HepG2 (cell line): ENCODE measurements at regions of chr1 and their contacts with region 1.

Region 1: DNA sequence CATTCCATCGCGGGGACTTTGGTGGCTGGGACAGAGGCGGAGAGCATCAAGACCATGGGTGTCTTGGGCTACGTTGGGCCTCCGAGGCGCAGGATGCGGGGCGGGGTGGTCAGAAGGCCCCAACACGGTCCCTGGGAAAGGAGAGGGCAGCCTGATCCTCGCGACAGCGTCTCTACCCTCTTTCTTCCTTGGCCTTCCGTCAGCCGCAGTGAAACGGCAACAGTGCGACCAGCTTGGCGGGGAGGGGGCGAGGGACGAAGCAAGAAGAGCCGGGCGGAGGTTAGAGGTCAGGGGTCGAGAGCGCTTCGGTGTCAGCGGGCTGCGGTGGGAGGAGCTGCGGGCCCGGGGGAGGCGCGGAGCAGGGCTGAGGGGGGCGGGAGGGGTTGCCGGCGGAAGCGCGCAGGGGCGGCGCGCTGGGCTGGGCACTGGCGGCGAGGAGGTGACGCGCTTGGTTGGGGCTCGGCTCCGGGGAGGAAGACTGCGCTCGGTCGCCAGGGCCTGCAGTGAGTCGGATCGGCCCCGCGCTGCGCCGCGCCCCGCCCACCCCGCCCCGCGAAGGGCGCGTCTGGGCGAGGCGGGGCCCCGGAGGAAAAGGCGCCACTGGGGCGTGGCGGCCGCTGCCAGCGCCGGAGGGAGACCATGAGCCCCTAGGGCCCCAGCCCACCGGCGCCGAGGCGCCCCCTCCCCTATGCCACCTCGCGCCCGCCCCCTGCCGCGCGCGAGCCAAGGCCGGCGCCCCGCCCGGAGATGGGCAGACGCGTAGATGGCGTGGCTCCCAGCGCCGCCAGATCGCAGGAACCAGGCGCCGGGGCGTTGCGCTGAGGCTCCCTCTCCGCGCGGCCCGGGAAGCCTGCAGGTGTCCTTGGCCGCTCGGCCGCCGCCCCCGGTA is at the start of gene KCNC4:
- DNase-seq: peak; percentile 53
- ATAC-seq: peak; percentile 71
- H3K4me3 ChIP-seq: peak within 1 kb of the TSS; percentile 47 to 74 (median 57)
- H3K27ac ChIP-seq: no peak within 1 kb of the TSS
- H3K4me1 ChIP-seq: peaks cover 10% of the 10 kb centered on the region
- H3K27me3 ChIP-seq: peaks cover 6 to 62% of the 10 kb centered on the region in 2 experiments; a peak in 3 of 5 replicates
- CTCF ChIP-seq: no peak
- EP300 ChIP-seq: no peak
- POLR2A ChIP-seq: no peak
- RAD21 ChIP-seq: no peak
- total RNA-seq, gene KCNC4: 0.20 and 0.24 TPM in 2 replicates

Region 2: DNA sequence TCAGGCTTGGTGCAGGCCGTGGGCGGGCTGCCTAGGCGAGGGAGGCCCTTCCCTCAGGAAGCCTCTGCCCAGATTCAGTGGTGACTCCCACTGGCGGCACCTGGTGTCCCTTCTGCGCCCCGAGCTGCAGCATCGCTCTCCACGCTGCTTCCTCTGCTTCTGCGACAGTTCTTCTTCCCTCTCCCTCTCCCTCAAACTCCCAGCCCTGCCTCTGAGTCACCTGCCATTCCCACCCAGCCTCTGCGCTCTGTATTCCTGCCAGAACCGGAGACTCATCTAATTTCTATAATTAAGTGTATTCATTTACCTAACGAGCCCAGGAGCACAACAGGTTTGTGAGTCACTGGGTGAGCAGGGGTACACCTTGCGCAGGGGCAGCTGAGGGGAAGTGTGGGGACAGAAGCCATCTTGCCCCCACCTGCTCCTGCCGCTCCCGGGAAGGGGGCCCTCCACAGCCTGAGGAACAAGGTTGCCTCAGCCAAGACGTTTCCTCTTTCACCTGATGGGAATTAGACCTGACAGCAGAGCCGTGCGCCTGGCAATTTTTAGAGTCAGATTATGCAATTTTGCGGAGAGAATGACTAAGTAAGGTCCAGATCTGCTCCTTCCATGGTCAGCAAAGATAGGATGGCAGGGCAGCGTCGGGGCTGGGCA is 19.5 kb after region 1 on chr1:
- CTCF ChIA-PET with region 1: no interaction called
- POLR2A ChIA-PET with region 1: no interaction called
- in situ Hi-C with region 1: no loop called
- intact Hi-C with region 1: loop called (anchors 1 kb)
- DNase-seq: no peak
- ATAC-seq: no peak
- H3K4me3 ChIP-seq: no peak overlapping the region
- H3K27ac ChIP-seq: no peak overlapping the region
- H3K4me1 ChIP-seq: peaks cover 8% of the 10 kb centered on the region; the same call in 1 of the 2 replicates
- H3K27me3 ChIP-seq: peaks cover 0 to 10% of the 10 kb centered on the region in 2 experiments; a peak in 4 of 5 replicates
- CTCF ChIP-seq: no peak
- EP300 ChIP-seq: no peak
- POLR2A ChIP-seq: no peak
- RAD21 ChIP-seq: no peak

Region 3: DNA sequence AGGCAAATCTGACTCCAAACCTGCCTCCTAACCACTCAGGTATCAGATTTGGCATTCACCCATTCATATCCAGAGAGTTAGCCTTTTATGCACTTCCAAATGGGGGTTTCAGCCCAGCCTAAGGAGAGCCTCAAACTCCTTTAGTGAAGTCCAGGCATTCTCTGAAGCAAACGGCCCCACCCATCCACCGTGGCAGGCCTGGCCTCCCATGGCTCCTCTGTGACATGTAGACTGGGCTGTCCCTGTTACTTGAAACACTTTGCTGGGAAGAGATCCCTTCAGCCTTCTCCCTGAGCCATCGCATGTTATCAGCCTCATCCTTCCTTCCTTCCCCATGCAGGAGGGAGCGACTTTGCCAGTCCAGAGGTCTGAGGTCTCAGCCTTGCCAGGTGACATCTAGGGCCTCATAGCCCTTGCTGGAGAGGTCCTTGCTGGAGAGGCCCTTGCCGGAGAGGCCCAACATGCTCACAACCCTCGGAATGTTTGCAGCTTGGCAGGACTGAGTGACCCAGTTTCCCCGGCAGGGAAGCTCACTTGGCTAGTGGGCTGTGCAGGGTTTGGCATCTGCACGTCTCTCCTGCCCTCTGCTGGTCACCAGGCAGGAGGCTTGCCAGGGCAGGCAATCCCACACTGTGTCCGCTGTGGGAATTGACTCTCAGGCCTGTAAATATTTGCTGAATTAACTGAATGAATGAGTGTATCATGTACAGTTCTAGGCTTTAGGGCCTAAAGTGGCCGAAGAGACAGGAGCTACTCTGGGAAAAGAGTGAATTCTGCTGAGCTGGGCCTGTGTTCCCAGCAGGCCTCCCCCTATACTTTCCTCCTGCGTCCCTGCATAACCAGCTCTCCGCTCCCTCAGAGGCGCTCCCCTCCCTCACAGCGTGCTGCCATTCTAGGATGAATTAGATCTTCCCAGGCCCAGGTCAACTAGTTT is 102.5 kb after region 1 on chr1:
- CTCF ChIA-PET with region 1: interaction called, 57 read pairs
- POLR2A ChIA-PET with region 1: no interaction called
- in situ Hi-C with region 1: loop called (anchors 5 kb)
- intact Hi-C with region 1: loop called (anchors 1 kb)
- DNase-seq: peak; percentile 59
- ATAC-seq: peak; percentile 99
- H3K4me3 ChIP-seq: peak overlapping the region in 1 of 3 experiments; percentile 4; a peak in 1 of 6 replicates
- H3K27ac ChIP-seq: no peak overlapping the region
- H3K4me1 ChIP-seq: peaks cover 8% of the 10 kb centered on the region; the same call in 1 of the 2 replicates
- H3K27me3 ChIP-seq: peaks cover 0 to 5% of the 10 kb centered on the region in 2 experiments; a peak in 2 of 5 replicates
- CTCF ChIP-seq: peak; percentile 97
- EP300 ChIP-seq: no peak
- POLR2A ChIP-seq: no peak
- RAD21 ChIP-seq: peak; percentile 94

Region 4: DNA sequence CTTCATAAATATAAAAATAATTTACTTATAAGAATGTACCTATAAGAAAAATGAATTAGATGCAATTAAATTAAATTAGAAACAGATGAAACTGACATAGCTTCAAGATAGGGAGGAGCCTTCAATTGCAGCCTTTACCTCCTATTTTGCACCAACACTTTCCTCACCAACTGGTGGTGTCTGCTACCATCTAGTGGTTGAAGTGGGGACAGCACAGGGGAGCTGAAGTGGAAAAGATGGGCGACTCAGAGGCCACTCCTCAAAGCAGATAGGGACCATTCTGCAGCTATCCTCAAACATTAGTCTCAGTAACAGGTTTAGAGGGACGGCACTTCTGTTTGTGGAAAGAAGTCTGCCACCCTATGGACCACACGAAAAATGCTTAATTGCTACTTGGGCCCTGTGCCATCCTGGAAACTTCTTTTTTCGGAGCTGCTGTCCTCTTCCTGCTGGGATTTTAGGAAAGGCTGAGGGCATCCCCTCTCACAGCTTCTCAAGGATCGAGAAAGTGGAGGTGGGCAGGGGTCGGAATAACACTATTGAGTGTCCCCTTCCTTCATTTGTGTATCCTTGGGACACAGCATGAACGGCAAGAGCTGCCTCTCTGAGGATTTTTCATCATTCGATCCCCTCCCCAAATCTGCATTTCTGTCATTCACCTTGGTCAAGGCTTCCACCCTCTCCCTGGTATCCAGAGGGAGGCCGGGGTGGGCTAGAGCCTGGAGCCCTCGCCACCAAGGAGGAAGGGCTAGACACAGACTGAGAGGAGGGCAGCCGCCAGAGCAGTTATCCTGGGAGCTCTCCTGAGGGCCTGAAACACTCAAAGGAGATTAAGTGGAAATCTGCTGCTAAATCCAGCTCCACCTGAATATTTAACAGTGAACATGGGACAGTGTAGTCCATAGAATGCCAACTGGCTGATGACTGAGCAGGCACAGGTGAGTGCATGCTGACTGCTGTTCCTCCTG is 250.6 kb after region 1 on chr1:
- CTCF ChIA-PET with region 1: interaction called, 15 read pairs
- POLR2A ChIA-PET with region 1: interaction called, 4 read pairs
- in situ Hi-C with region 1: no loop called
- intact Hi-C with region 1: no loop called
- DNase-seq: peak; percentile 69
- ATAC-seq: peak; percentile 78
- H3K4me3 ChIP-seq: no peak overlapping the region
- H3K27ac ChIP-seq: no peak overlapping the region
- H3K4me1 ChIP-seq: 0 out of 2 replicates have a peak, but pooled peaks cover 7% of the 10 kb centered on the region
- H3K27me3 ChIP-seq: peaks cover 0 to 4% of the 10 kb centered on the region in 2 experiments; a peak in 1 of 5 replicates
- CTCF ChIP-seq: peak; percentile 91
- EP300 ChIP-seq: no peak
- POLR2A ChIP-seq: no peak
- RAD21 ChIP-seq: peak; percentile 84

Region 5: DNA sequence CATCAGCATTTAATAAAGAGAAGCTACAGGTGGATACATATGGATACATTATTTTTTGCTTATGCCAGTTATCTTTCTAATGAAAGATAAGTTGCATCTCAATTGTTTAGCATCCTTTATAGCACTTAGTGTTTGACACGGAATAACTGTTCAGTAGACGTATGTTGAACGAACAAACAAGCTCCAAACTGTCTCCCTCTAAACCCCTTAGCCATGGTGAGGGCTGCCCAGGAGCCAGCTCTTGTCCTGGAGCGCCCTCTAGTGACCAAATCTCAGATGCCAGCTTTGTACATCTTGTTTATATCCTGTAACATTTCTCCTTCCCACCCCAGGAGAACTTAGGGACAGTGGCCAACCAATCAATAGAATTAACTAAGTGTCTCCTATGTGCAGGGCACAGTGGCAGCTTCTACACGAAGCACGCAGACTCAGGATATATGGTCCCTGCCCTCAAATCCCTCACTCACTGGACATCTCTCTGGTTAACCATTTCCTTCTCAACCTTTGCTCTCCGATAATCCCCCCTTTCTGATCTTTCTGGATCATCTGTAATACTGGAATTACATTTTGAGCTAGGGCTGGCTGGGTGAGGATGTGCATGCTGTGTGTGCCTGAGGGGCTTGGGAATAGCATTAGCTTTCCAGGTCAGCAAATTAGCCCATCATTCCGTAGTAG is 286.1 kb after region 1 on chr1:
- CTCF ChIA-PET with region 1: interaction called, 4 read pairs
- POLR2A ChIA-PET with region 1: no interaction called
- in situ Hi-C with region 1: loop called (anchors 10 kb)
- intact Hi-C with region 1: no loop called
- DNase-seq: peak; percentile 56
- ATAC-seq: peak; percentile 94
- H3K4me3 ChIP-seq: no peak overlapping the region
- H3K27ac ChIP-seq: no peak overlapping the region
- H3K4me1 ChIP-seq: no peaks in the 10 kb centered on the region
- H3K27me3 ChIP-seq: no peaks in the 10 kb centered on the region; a peak in 1 of 5 replicates
- CTCF ChIP-seq: peak; percentile 87
- EP300 ChIP-seq: no peak
- POLR2A ChIP-seq: no peak
- RAD21 ChIP-seq: peak; percentile 86